Left ventricle myocardium inferior (tissue), 1 donor: ENCODE measurements at regions of chr7 and their contacts with region 1.

Region 1: DNA sequence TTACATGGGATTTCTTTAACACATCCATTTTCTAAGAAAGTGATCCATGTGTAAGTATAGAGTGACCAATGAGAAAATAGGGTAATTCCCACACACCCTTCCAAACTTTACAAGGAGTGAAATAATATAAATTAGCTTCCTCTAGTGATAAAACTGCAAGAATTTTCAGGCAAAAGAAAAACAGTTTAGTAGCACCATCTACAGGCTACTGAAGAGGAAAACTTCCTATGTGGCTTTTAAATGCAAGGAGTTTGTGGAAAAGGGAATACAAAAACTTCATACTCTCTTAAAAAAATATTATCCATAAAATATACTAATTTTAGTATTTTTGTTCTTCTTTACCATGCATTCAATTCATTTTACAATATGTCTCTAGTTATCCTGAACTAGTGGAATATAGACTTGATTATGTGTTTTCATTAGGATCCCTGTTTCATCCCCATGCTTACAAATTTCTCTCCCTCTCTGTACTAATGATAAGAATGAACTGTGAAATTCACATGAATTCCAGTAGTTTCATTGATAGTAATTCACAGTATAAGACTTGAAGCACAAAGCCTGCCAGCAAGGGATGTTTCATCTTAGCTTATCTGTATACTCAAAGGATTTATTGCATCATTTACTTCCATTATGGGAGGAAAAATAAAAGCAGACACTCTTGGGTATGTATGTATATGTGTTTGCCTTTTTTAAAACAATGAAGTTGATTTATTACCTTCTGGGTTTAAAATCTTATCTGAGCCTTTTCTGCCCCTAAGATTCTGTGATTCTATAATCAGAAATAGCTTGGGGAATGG is 442.9 kb downstream of the AUTS2 start:
- DNase-seq: no peak
- H3K4me3 ChIP-seq: no peak overlapping the region
- H3K27ac ChIP-seq: no peak overlapping the region
- H3K4me1 ChIP-seq: peaks cover 25% of the 10 kb centered on the region
- H3K27me3 ChIP-seq: no peaks in the 10 kb centered on the region
- CTCF ChIP-seq: peak; percentile 69

Region 2: DNA sequence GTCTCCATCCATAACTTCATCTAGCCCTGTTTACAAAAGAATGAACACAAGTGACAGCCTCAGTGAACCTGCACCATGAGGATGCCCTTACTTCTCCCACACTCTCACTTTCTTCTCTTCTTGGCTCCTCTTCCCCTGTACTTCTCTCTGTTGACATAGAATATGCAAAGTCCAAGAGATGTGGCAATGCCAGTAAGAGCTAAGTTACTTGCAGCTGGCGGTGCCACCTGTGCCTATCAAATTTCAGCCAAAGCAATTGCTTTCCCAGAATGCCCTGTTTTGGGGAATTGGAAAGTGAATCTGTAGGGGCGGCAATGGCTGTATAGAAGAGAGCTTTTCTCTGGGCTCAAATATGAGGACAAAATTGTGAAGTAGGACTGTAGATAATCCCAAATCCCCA is 114.9 kb after region 1 on chr7:
- intact Hi-C with region 1: loop called (anchors 5 kb)
- DNase-seq: no peak
- H3K4me3 ChIP-seq: no peak overlapping the region
- H3K27ac ChIP-seq: no peak overlapping the region
- H3K4me1 ChIP-seq: no peaks in the 10 kb centered on the region
- H3K27me3 ChIP-seq: no peaks in the 10 kb centered on the region
- CTCF ChIP-seq: no peak

Region 3: GRCh38 chr7:70698219-70698832 is 657.2 kb after region 1 on chr7:
- intact Hi-C with region 1: loop called (anchors 5 kb)
- DNase-seq: no peak
- H3K4me3 ChIP-seq: no peak overlapping the region
- H3K27ac ChIP-seq: no peak overlapping the region
- H3K4me1 ChIP-seq: peaks cover 30% of the 10 kb centered on the region
- H3K27me3 ChIP-seq: no peaks in the 10 kb centered on the region
- CTCF ChIP-seq: peak; percentile 94